ENCODE measurements at regions of chr9 and their contacts with region 1.

Region 1: DNA sequence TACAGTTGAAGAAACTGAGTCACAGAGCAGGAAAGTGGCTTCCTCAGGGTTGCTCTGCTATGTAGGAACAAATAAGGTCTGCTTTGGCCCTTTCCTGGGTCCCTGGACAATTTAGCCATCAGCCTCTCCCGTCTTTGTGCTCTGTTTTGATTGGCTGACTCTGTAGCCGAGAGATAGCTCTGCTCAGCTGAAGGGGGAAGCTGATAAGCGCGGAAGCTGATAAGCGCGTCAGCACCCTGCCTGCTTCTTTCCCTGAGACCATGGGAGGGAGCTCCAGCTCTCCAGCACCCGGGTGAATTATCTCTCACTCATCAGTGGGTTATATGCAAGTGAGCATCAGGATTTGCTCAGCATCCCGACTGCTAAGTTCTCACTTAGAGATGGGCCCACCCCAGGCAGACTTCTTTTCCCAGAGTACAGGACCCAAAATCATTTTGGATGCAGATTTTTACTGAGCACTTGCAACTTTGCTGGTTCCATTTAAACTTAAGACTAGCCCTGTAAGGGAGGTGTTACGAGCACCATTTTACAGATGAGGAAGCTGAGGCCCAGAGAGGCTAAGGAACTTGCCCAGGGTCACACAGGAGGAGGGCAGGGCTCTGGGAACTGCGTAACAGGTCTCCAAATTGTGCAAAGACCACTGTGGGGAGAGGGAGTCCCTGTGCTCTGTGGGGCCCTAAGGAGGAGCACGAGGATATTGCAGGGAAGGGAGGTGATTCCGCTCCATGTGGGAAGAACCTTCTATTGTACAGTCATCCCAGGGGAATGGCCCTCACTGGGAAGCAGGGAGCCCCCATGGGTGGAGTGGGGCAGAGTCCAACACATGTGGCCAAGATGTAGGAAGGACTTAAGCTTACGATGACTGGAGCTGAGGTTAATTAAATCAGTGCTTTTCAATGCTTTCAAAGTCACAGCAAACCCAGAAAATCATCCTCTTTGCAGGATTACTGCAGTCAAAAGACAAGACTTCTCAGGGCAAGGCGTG is 83.7 kb upstream of the ORM1 start:
- DNase-seq: no peak
- H3K4me3 ChIP-seq: no peak overlapping the region
- H3K27ac ChIP-seq: no peak overlapping the region
- H3K4me1 ChIP-seq: peaks cover 16% of the 10 kb centered on the region
- H3K27me3 ChIP-seq: no peaks in the 10 kb centered on the region
- CTCF ChIP-seq: no peak
- EP300 ChIP-seq: no peak
- POLR2A ChIP-seq: no peak

Region 2: DNA sequence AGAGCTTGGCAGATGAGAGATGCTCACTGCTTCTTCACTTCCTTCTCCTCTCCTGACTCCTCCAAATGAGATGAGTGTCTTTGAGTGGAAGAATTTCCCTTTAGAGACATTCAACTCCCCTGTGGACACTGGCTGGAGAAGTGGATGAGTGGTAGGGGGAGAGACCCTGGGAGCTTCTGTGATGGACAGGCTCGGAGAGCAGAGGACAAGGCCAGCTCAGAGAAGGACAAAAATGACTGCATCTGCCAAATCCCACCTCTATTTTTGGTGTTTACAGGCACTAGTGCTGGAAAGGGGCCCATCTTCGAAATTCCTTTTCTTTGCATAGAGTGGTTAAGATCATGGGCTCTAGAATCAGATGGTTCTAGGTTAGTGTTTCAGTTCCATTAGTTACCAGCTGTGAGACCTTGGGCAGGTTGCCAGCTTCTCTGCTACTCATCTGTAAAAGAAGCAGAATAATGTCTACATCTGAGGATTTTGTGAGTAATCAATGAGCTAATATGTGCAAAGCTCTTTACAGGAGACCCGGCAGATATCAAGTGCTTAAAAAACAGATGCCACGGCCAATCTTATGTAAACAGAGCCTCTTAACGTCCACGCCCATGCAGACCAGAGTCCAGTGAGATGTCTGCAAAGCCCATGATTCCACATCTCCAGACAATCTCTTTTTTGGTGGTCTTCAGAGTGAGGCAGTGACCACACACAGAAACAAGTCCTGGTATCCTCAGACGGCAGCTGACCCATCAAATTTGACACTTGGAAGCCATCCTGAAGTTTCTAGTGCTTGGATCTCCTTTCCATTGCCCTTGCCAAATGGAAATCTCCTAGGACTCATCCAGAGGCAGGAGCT is 97.4 kb before region 1 on chr9:
- intact Hi-C with region 1: no loop called
- DNase-seq: peak; percentile 55 to 75 (median 70)
- H3K4me3 ChIP-seq: no peak overlapping the region
- H3K27ac ChIP-seq: no peak overlapping the region
- H3K4me1 ChIP-seq: peaks cover 10% of the 10 kb centered on the region
- H3K27me3 ChIP-seq: no peaks in the 10 kb centered on the region
- CTCF ChIP-seq: no peak
- EP300 ChIP-seq: no peak
- POLR2A ChIP-seq: no peak

Region 3: DNA sequence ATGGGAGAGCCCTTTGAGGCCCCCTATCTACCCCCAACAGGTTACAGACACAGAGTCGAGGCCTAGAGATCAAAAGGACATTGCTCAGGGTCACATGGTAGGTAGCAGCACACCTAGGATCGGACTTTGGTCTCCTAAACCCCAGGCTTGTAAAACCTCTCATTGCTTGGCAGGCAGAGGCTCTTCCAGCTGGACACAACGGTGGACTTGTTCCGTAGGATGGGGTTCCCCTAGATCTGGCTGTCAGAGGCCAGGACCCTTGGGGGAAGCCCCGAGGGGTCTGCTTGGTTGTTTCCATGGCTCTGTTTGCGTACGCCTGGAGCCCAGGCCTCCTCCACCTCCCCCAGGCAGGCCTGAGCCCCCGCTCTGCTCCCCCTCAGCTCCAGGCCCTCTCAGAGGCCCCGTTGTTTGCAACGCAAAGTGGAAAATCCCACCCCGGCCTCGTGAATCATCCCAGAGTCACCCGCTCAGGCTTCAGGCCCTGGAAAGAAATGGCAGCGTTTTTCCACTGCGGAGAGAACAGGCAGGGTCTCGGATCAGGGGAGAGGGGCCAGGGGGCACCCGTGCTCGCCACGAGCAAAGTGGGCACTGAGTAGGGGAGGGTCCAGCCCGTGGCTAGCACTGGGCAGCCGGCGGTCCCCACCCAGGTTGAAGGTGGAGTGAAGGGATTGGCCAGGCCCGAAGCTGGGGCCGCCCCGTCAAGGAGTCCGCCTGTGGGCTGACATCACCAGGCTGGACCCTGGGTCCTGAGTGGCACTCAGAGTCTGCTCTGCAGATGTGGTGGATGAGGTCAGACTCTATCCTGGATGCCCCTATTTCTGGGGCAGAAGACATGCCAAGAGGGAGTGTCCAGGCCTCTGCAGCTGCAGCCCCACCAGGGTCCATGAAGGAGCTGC is 64.1 kb before region 1 on chr9:
- intact Hi-C with region 1: loop called in 1 of 4 experiments (anchors 10 kb)
- DNase-seq: peak in 2 of 5 donors; percentile 52 to 53
- H3K4me3 ChIP-seq: no peak overlapping the region
- H3K27ac ChIP-seq: peak overlapping the region in 1 of 2 donors; percentile 18
- H3K4me1 ChIP-seq: peaks cover 11% of the 10 kb centered on the region
- H3K27me3 ChIP-seq: no peaks in the 10 kb centered on the region
- CTCF ChIP-seq: no peak
- EP300 ChIP-seq: no peak
- POLR2A ChIP-seq: no peak

Region 4: DNA sequence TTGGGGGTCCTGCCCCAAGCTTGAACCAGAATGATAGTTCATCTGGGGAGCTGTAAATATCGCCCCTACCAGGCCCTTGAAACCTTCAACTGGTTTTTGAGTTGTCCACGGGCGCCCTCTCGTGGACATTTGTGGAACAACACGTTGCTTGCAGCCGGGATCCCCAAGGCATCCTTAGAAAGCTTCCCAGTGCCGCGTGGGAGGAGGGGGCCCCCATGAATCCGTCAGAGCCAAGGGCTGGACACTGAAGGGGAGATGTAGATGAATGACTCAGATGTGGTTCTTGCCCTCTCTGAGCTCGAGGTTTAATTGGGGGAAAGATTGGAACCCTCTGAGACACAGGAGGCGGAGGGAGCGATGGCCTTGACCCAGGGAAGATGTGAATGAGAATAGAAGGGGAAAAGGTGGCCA is 51.9 kb after region 1 on chr9:
- intact Hi-C with region 1: no loop called
- DNase-seq: peak; percentile 63 to 88 (median 83)
- H3K4me3 ChIP-seq: no peak overlapping the region
- H3K27ac ChIP-seq: no peak overlapping the region
- H3K4me1 ChIP-seq: no peaks in the 10 kb centered on the region
- H3K27me3 ChIP-seq: no peaks in the 10 kb centered on the region
- CTCF ChIP-seq: peak; percentile 85 to 94 (median 92)
- EP300 ChIP-seq: no peak
- POLR2A ChIP-seq: no peak

Region 5: GRCh38 chr9:114385412-114386181 is 146.4 kb after region 1 on chr9:
- intact Hi-C with region 1: loop called in 1 of 4 experiments (anchors 10 kb)
- DNase-seq: peak in 4 of 5 donors; percentile 54 to 71 (median 64)
- H3K4me3 ChIP-seq: peak overlapping the region; percentile 62
- H3K27ac ChIP-seq: peak overlapping the region in 1 of 2 donors; percentile 88
- H3K4me1 ChIP-seq: peaks cover 30% of the 10 kb centered on the region
- H3K27me3 ChIP-seq: no peaks in the 10 kb centered on the region
- CTCF ChIP-seq: no peak
- EP300 ChIP-seq: no peak
- POLR2A ChIP-seq: peak; percentile 31